ENCODE measurements at regions of chr1 and their contacts with region 1.

Region 1: DNA sequence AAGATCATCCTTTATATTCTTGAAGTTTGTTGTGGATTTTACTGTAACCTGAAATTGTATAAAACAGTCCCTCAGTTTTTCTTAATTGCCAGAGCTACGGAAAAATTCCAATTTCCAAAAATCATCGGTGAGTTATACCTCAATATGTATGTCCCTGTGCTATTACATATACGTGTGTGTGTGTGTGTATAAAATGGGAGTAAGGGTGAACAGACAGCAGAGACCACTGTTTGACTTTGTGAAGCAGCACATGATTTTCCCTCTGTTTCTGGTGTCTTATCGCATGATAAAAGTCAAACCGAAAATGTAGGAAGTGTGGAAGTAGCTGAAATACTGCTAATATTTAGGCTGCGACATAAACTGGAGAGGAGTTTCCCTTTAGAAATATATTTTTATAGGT is 1.2 kb downstream of the OR2T1 start:
- DNase-seq: peak; percentile 15
- CTCF ChIP-seq: no peak

Region 2: GRCh38 chr1:248622570-248623001 is 218.6 kb after region 1 on chr1:
- in situ Hi-C with region 1: loop called (anchors 10 kb)
- DNase-seq: peak; percentile 60
- CTCF ChIP-seq: peak; percentile 60

Measured in GM13977 (cell line).